Activated CD4-positive, alpha-beta T cell treated with anti-CD3 and anti-CD28 coated beads for 36 hours (primary cell): ENCODE measurements at regions of chr6 and their contacts with region 1.

Region 1: DNA sequence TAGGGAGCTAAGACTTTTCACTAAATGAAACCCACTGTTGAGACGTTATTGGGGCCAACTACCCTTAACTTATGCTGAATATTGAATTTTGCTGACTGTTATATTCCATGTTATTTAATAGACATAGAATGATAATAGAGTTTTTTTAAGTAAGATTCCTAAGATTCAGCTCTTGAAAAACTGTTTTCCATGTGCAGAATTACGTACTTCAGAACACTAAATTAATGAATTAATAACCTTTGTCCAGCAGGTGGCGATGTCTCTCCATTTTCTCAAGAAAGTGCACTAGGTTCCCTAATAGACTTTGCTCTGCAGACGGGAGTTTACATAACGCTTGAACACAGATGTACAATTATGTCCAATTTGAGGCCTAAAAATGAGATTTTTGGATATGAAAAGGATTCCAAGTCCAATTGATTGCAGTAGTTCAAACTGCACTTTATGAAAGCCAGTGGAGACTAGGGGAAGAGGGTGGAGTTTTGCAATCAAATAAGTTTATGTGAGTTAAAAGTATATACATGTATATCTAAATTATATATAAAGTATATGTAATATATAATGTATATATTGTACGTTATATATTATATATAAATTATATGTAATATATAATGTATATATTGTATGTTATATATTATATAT is 282.1 kb downstream of the UST start:
- DNase-seq: peak; percentile 81
- ATAC-seq: no peak
- H3K4me3 Mint-ChIP-seq: peak overlapping the region; percentile 13
- H3K27ac Mint-ChIP-seq: peak overlapping the region; percentile 85
- H3K4me1 Mint-ChIP-seq: peaks cover 45% of the 10 kb centered on the region
- H3K27me3 Mint-ChIP-seq: no peaks in the 10 kb centered on the region

Region 2: GRCh38 chr6:148559848-148560433 is 468.9 kb before region 1 on chr6:
- CTCF ChIA-PET with region 1: interaction called, 4 read pairs
- POLR2A ChIA-PET with region 1: no interaction called
- intact Hi-C with region 1: loop called (anchors 1 to 5 kb)
- DNase-seq: peak; percentile 83
- ATAC-seq: peak; percentile 87
- H3K4me3 Mint-ChIP-seq: no peak overlapping the region
- H3K27ac Mint-ChIP-seq: no peak overlapping the region
- H3K4me1 Mint-ChIP-seq: peaks cover 7% of the 10 kb centered on the region
- H3K27me3 Mint-ChIP-seq: peaks cover 20% of the 10 kb centered on the region

Region 3: DNA sequence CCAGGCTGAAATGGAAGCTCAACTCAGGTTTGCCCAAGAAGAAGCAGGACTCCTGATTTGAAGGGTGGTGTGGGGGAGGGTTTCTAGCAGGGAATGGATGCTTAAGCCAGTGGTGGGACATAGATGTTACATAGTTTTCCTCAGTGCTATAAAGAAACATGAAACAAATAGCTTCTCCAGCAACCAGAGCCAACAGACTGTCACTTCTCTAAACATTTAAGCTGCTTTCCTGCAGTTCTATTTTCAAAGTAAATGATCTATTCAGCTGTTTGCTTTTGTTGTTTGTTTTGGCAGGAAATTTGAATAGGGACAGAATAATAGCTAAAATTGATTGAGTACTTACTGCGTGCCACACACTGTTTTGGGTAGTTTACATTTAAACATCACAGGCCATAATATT is 113.1 kb before region 1 on chr6:
- CTCF ChIA-PET with region 1: no interaction called
- POLR2A ChIA-PET with region 1: no interaction called
- intact Hi-C with region 1: no loop called
- DNase-seq: no peak
- ATAC-seq: no peak
- H3K4me3 Mint-ChIP-seq: no peak overlapping the region
- H3K27ac Mint-ChIP-seq: no peak overlapping the region
- H3K4me1 Mint-ChIP-seq: peaks cover 2% of the 10 kb centered on the region
- H3K27me3 Mint-ChIP-seq: no peaks in the 10 kb centered on the region

Region 4: DNA sequence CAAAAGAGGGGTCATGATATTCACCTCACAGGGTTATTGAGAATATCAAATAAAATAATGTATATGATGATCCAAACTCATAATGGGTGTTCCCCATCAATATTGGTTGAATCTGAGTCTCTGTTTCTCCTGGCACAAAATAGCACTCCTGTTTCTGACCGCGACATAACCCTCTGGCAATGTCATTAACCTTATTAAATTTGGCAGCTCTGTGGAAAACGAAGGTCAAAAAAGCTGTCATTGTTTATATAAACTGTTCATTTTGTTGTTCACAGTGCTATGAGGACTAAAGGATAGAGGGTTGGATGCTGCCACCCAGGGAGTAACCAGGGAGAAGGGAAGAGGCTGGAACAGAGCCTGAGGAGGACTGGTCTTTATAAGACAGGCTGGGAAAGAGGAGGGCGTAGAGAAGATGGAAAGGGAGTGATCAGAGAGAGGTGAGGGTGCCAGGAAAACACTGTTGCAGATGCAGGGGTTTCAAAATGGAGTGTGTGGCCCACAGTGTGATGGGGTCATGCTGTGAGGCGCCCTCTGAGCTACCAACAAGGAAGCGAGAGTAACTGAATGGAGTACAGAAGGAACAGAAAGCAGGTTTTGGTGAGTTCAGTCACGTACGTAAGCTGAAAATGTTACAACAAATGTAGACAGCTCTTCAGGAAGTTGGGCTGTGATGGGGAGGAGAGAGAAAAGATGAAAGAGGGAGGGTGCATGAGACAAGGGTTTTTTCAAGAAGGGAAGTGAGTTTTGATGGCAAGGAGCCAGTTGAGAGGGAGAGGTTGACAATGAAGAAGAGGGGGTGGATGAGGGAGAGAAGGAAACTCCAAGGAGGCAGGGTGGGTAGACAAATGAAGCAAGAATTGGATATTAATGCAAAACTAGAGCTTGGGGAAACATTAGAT is 37.0 kb after region 1 on chr6:
- CTCF ChIA-PET with region 1: interaction called, 6 read pairs
- POLR2A ChIA-PET with region 1: no interaction called
- intact Hi-C with region 1: loop called in 1 of 2 experiments (anchors 2 kb)
- DNase-seq: peak; percentile 54
- ATAC-seq: peak; percentile 97
- H3K4me3 Mint-ChIP-seq: peak overlapping the region; percentile 24
- H3K27ac Mint-ChIP-seq: peak overlapping the region; percentile 92
- H3K4me1 Mint-ChIP-seq: peaks cover 38% of the 10 kb centered on the region
- H3K27me3 Mint-ChIP-seq: no peaks in the 10 kb centered on the region

Region 5: DNA sequence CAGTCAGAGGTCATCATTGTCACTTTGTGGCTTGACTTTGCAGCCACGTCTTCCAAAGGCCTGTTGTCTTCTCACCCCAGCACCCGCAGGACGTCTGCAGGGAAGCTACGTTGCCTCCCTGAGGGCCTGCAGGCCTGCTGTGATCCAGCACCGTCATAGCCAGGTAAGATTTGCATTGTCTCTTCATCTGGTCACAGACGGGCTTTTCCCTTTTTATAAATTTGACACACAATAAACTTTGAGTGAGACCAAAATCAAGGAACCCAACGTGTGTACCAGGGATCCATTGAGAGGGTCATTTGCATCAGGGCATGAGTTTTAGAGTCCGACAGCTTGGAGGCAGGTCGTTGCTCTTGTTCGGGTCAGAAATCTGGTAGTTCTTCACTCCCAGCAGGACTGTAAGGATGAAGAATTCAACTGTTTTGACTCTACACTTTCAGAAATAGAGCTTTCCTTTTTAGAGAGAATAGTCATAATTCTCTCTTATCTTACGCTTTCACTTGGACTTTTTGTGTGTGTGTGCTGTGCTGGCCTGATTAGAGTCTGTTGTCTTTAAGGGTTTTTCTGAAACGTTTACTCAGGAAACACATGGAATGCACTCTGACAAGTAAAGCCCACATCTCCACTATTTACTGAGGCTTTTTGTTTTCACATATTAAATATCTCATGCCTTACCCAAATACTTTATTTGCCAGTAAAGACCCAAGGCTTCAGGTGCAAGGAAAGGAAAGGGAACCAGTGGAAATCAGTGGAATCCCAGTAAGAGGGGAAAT is 111.4 kb after region 1 on chr6:
- CTCF ChIA-PET with region 1: interaction called, 3 read pairs
- POLR2A ChIA-PET with region 1: interaction called, 3 read pairs
- intact Hi-C with region 1: loop called (anchors 1 kb)
- DNase-seq: peak; percentile 85
- ATAC-seq: peak; percentile 84
- H3K4me3 Mint-ChIP-seq: peak overlapping the region; percentile 63
- H3K27ac Mint-ChIP-seq: peak overlapping the region; percentile 97
- H3K4me1 Mint-ChIP-seq: peaks cover 42% of the 10 kb centered on the region
- H3K27me3 Mint-ChIP-seq: no peaks in the 10 kb centered on the region

Region 6: DNA sequence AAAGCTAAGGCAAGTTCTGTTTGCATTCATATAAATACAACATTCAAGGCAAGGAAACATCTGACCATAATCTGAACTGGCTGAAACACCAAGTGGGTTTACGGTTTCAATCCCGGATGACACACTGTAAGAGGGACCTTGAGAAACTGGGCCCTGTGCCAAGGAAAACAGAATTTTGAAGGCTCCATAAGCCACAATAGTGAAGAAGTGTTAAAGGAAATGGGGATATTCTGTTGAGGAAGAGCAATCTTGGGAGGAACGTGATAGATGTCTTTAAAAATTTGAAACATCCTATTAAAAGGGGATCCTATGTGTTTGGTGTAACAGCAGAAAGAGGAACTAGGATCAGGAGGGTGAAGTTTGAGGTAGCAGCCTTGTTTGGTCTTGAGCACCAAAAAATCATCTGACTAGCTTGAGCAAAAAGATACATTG is 206.3 kb after region 1 on chr6:
- CTCF ChIA-PET with region 1: interaction called, 4 read pairs
- POLR2A ChIA-PET with region 1: no interaction called
- intact Hi-C with region 1: loop called (anchors 1 to 2 kb)
- DNase-seq: peak; percentile 20
- ATAC-seq: no peak
- H3K4me3 Mint-ChIP-seq: no peak overlapping the region
- H3K27ac Mint-ChIP-seq: peak overlapping the region; percentile 98
- H3K4me1 Mint-ChIP-seq: peaks cover 44% of the 10 kb centered on the region
- H3K27me3 Mint-ChIP-seq: no peaks in the 10 kb centered on the region

Region 7: DNA sequence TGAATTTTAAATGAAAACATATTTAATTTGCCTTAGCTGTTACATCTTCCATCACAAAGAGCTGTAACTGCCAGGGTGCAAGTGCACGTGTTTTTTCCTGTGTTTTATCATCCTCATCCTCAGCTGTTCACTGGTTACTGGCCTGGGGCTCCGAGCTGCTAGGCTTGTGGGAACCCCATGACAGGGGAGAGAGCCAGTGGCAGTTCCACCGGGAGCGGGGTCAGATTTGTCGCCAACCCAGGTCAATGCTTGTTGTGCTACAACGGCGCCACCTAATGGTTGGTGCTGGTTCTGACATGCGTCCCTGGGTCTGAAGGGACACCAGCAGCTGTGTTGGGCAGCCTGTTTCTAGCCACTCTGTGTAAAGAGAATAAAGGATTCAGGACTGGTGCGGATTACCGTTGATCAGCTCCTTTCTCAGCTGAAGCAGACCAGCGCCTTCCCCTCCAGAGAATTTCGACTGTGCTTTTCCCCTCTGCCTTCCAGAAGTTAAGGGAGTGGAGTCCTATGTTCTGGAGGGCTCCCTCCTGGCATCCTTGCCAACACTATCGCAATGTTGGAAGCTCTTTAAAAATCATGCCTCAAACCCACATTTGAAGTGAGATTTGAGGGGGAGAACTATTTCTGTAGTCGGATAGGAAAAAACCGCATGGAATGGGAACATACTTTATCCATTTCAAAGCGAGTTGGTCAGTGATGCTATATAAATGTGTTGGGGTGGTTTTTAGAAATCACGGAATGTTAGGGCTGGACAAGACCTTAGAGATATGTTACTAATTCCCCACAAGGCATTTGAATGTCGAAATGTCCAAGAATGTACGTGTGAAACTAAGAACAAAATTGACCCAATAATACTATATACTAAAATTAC is 403.3 kb after region 1 on chr6:
- CTCF ChIA-PET with region 1: interaction called, 118 read pairs
- POLR2A ChIA-PET with region 1: no interaction called
- intact Hi-C with region 1: loop called (anchors 1 kb)
- DNase-seq: peak; percentile 95
- ATAC-seq: peak; percentile 98
- H3K4me3 Mint-ChIP-seq: no peak overlapping the region
- H3K27ac Mint-ChIP-seq: peak overlapping the region; percentile 59
- H3K4me1 Mint-ChIP-seq: peaks cover 4% of the 10 kb centered on the region
- H3K27me3 Mint-ChIP-seq: no peaks in the 10 kb centered on the region

Region 8: GRCh38 chr6:149513915-149514314 is 485.0 kb after region 1 on chr6:
- CTCF ChIA-PET with region 1: interaction called, 44 read pairs
- POLR2A ChIA-PET with region 1: interaction called, 4 read pairs
- intact Hi-C with region 1: loop called (anchors 1 to 2 kb)
- DNase-seq: no peak
- ATAC-seq: no peak
- H3K4me3 Mint-ChIP-seq: no peak overlapping the region
- H3K27ac Mint-ChIP-seq: no peak overlapping the region
- H3K4me1 Mint-ChIP-seq: peaks cover 55% of the 10 kb centered on the region
- H3K27me3 Mint-ChIP-seq: no peaks in the 10 kb centered on the region